Mucosa of descending colon (tissue), 3 donors: ENCODE measurements at regions of chr11 and their contacts with region 1.

Region 1: DNA sequence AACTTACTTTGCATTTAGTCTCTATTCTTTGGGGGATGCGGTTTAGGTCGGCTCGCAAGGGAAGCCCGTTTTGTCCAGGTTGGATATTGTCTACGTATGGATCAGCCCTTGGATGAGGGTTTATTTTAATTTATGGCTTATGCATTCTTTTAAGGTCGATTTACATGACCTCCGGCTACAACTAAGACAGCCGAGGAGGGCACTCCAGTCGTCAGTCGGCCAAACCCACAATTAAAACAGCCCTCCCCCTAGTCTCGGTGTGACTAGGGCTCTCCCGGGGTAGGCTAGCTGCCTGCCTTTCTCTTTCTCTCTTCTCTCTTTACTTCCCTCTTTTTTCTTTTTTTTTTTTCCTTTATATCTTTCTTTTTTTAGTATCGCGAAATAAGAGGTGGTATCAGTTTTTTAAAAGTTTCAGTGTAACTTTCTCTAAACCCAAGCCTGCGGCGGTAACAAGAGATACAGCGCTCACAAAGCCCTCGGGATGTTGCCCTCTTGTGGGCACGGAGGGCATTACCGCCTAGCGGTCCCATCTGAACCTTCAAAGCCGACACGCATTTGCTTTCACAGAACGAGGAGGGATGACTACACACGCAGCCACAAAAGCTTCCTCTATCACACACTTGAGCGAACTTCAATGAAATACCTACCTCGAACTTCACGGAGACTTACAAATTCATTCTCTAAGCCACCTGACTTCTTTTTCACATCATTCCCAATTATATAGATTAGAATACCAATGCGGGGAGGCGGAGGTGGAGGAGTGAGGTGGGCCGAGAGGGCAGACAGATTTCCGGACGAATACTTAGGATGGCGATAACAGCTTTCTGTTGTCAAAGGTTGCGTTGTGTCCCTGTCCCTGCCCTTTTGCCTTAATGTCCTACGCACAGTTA is 132.3 kb upstream of the C11orf58 start:
- DNase-seq: peak; percentile 86 to 96 (median 93)
- ATAC-seq: peak; percentile 82
- H3K4me3 ChIP-seq: no peak overlapping the region
- H3K4me1 ChIP-seq: peaks cover 19% of the 10 kb centered on the region
- CTCF ChIP-seq: peak; percentile 91

Region 2: DNA sequence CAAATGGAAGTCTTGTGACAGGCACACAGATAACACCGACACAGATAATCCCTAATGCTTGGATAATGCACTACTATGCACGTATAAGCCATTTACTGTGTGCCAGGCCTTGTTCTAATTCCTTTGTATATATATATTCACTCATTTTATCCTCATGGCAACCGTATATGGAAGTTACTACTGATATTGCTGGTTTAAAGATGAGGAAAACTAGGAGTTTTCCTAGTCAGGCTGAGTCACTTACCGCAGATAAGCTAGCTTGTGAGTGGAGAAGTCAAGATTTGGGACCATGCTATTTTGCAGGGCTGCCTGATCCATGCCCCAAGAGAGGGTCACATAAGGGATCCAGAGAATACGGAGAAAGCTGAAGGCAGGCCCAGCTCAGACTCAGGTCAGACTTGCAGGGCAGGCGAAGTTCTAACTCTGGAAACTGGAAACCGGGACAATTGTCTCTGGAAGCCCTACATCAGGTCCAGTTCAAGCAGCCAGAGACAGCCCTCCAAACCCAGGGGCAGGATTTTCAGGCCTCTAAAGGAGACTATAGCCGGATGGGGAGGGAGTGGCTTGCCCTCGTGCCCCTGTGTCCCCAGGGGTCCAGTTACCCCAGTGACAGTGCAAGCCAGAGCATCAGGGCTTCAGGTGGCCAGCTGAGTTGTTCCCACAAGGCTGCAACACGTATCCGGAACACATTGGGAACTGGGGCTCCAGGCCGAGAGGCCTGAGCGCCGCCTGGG is 956.6 kb before region 1 on chr11:
- intact Hi-C with region 1: loop called in 1 of 2 experiments (anchors 10 kb)
- DNase-seq: no peak
- ATAC-seq: no peak
- H3K4me3 ChIP-seq: no peak overlapping the region
- H3K4me1 ChIP-seq: peaks cover 14% of the 10 kb centered on the region
- CTCF ChIP-seq: no peak

Region 3: GRCh38 chr11:15819679-15820286 is 786.4 kb before region 1 on chr11:
- intact Hi-C with region 1: loop called in 1 of 2 experiments (anchors 10 kb)
- DNase-seq: peak; percentile 80 to 91 (median 81)
- ATAC-seq: peak; percentile 81
- H3K4me3 ChIP-seq: no peak overlapping the region
- H3K4me1 ChIP-seq: peaks cover 27% of the 10 kb centered on the region
- CTCF ChIP-seq: peak; percentile 86

Region 4: DNA sequence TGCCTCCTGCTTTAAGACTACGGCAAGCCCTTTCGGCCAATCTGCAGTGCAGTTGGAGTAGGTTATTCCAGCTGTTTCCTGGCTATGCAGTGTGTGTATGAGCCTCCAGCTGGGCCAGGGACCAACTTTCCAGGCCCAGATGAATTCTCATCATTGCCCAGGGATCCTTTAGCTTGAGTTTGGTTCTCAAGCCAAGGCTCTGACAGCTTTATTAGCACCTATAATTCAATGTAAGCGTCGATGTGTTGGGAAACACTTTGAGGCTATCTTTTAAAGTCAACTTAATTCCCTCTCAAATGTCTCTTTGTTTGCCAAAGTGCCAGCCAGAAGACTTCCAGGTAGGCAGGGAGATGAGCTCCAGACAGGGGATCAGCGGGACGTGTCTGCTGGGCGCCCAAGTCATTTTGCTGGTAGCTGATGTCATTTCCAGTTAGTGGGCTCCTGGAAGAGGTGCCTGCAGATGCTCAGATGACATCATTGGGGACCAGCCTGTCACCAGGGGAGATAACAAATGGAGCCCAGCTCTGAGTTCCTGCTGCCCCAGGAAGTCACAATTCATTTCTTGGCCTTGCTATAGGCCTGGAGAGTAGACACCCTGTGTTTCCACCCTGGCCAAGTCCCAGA is 770.2 kb before region 1 on chr11:
- intact Hi-C with region 1: loop called in 1 of 2 experiments (anchors 10 kb)
- DNase-seq: no peak
- ATAC-seq: no peak
- H3K4me3 ChIP-seq: no peak overlapping the region
- H3K4me1 ChIP-seq: peaks cover 13% of the 10 kb centered on the region
- CTCF ChIP-seq: no peak

Region 5: DNA sequence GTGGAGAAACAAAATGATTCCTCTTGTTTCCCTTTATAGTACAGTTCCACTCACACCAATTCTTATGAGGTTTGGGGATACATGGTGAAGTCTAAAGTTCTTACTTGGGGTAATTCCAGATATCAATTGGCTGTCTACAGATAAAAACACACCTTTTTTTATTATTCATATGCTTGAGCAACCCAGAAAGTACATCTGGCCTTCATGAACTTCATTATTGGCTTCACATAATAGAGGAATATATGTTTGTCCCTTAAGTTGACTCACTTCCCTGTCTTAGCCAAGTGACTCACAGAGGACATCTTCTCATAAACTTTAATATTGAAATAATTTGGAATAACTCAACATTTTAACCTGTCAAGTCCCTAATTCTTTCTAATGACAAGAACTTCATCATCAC is 213.5 kb before region 1 on chr11:
- intact Hi-C with region 1: no loop called
- DNase-seq: no peak
- ATAC-seq: no peak
- H3K4me3 ChIP-seq: no peak overlapping the region
- H3K4me1 ChIP-seq: no peaks in the 10 kb centered on the region
- CTCF ChIP-seq: no peak

Region 6: DNA sequence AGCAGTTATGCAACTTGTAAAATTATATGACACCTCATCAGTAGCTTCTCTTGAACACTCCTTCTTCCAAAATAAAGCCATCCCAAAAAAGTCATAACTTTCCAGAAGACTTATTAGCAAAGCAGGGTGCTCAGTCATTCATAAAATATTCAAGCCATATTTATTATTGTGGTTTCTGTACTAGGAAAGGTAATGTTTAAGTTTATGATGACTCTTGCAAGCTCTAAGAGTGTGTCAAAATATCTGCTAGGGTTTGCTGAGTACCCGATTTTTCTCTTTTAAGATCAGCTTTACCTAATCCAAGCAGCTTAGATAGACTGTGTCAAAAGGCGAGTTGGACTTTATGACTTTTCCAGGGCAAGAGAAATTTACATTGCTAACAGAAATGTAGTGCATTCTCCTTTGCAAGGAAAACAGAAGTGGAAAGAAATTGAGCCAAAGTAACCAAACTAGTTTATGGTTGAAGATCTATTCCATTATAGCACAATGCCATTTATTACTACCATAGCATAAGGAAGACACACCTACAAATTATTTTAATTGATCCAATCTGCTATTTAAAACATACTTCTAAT is 151.8 kb before region 1 on chr11:
- intact Hi-C with region 1: no loop called
- DNase-seq: no peak
- ATAC-seq: no peak
- H3K4me3 ChIP-seq: no peak overlapping the region
- H3K4me1 ChIP-seq: no peaks in the 10 kb centered on the region
- CTCF ChIP-seq: no peak